Activated CD8-positive, alpha-beta memory T cell treated with anti-CD3 and anti-CD28 coated beads, Interleukin-2, amount 10 ng/mL, durations not matched to agents 7 days and 5 days (primary cell): ENCODE measurements at regions of chr16 and their contacts with region 1.

Region 1: DNA sequence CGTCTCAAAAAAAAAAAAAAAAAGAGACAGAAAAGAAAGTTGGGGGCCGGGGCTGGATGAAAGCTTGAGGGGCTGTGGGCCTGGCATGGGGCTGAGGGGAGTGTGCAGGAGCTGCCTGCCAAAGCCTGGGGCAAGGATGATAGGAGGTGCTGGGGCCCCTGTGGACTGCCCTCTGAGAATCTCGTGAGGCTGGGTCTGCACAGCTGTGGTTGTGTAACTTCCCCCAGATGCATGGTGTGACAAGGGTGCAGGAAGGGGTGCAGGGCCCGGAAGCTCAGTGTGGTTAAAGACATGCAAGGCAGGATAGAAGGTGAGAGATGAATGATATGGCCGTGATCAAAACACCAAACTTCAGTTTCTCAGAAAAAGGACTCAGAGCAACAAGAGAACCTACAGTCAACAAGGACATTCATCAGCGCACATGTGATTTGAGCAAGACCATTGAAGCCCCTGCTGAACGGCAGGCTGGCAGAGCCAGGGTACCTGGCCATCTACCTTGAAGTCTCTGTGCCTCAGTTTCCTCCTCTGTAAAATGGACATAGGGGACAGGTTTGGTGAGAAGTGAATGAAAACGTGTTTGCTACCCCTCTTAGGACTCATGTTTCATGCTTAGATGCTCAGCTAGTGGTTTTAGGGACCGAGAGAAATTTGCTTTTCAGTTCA is 9.6 kb downstream of the IL32 start:
- DNase-seq: peak; percentile 97
- ATAC-seq: peak; percentile 72
- H3K4me3 Mint-ChIP-seq: peak overlapping the region; percentile 79
- H3K27ac Mint-ChIP-seq: peak overlapping the region; percentile 94
- H3K4me1 Mint-ChIP-seq: peaks cover 90% of the 10 kb centered on the region
- H3K27me3 Mint-ChIP-seq: no peaks in the 10 kb centered on the region

Region 2: DNA sequence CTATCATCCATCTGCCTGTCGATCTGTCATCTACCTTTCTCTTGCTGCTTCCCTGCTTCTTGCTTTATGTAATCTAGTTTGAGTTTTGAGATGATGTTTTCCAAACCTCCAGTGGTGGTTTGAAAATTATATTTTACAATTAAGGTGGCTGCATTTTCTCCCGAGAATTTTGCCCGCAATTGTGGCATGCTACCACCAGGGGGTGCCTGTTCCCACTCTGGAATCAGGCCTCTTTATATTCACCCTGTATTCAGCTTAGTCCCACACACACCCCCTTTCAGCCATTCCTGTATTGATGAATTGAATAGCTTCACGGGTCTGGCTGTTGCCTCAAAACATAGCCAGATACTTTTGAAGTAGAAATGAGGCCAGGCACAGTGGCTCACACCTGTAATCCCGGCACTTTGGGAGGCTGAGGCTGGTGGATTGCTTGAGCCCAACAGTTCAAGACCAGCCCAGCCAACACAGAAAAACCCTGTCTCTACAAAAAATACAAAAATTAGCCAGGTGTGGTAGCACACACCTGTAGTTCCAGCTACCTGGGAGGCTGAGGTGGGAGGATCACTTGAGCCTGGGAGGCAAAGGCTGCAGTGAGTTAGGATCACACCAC is 220.2 kb before region 1 on chr16:
- CTCF ChIA-PET with region 1: no interaction called
- DNase-seq: no peak
- ATAC-seq: no peak
- H3K4me3 Mint-ChIP-seq: no peak overlapping the region
- H3K27ac Mint-ChIP-seq: no peak overlapping the region
- H3K4me1 Mint-ChIP-seq: peaks cover 4% of the 10 kb centered on the region
- H3K27me3 Mint-ChIP-seq: peaks cover 9% of the 10 kb centered on the region

Region 3: DNA sequence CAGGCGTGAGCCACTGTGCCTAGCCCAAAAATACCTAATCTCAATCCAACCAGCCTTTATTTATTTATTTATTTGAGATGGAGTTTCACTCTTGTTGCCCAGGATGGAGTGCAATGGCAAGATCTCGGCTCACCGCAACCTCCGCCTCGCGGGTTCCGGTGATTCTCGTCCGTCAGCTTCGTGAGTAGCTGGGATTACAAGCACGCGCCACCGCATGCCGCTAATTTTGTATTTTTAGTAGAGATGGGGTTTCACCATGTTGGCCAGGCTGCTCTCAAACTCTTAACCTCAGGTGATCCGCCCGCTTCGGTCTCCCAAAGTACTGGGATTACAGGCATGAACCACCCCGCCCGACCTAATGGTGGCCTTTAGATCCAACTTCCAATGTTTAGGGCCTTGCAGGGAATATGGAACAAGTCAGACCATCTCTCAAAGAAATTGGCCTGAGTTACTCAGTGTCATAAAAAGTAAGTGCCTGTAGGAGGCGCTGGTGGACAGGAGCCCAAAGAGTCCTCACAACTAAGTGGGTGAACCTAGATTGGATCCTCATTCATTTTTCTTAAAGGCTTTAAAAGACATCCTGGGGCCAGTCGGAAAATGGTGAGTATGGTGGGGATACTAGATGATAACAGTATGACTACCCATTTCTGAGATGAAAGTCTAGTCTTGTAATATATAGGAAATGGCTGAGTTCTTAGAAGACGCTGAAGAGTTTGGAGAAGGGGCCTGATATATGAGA is 19.5 kb after region 1 on chr16:
- CTCF ChIA-PET with region 1: interaction called, 88 read pairs
- DNase-seq: peak; percentile 73
- ATAC-seq: peak; percentile 26
- H3K4me3 Mint-ChIP-seq: no peak overlapping the region
- H3K27ac Mint-ChIP-seq: peak overlapping the region; percentile 69
- H3K4me1 Mint-ChIP-seq: peaks cover 46% of the 10 kb centered on the region
- H3K27me3 Mint-ChIP-seq: no peaks in the 10 kb centered on the region

Region 4: GRCh38 chr16:3099732-3100499 is 24.9 kb after region 1 on chr16:
- CTCF ChIA-PET with region 1: interaction called, 88 read pairs
- DNase-seq: peak; percentile 97
- ATAC-seq: peak; percentile 93
- H3K4me3 Mint-ChIP-seq: peak overlapping the region; percentile 74
- H3K27ac Mint-ChIP-seq: peak overlapping the region; percentile 80
- H3K4me1 Mint-ChIP-seq: peaks cover 51% of the 10 kb centered on the region
- H3K27me3 Mint-ChIP-seq: no peaks in the 10 kb centered on the region

Region 5: DNA sequence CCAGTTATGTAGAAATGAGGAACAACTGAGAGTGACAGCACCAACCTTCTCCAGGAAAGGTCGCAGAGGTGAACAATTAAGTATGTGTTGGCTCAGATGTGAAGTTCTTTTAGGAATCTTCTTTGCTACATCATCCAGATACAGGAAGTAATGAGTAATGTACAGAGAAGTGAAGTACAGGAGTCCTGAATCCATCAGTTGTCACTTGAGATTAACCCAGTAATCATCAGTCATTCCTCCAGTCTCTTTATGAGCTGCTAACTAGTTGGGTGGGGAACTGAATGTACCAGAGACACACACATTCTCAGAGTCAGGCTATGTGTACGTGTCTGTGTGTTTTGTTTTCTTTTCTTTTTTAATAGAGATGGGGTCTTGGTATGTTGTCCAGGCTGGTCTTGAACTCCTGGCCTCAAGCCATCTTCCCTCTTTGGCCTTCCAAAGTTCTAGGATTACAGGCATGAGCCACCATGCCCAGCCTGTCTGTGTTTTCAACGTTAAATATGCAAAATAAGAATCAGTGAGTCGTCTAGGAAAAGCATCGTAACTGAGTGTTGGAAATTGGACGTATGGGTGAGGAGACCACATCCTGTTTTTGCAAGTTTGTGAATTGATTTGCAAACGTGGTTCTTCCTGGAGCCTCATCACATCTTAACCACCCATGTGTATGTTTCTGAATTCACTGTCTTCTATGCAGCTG is 140.1 kb after region 1 on chr16:
- CTCF ChIA-PET with region 1: no interaction called
- DNase-seq: peak; percentile 64
- ATAC-seq: peak; percentile 84
- H3K4me3 Mint-ChIP-seq: peak overlapping the region; percentile 6
- H3K27ac Mint-ChIP-seq: peak overlapping the region; percentile 84
- H3K4me1 Mint-ChIP-seq: peaks cover 34% of the 10 kb centered on the region
- H3K27me3 Mint-ChIP-seq: no peaks in the 10 kb centered on the region